AG04449 (cell line): ENCODE measurements at regions of chr6 and their contacts with region 1.

Region 1: GRCh38 chr6:159654483-159655098 is 38.5 kb downstream of the SOD2 start:
- DNase-seq: no peak
- H3K4me3 ChIP-seq: no peak overlapping the region
- CTCF ChIP-seq: peak; percentile 17

Region 2: GRCh38 chr6:159151266-159151855 is 503.2 kb before region 1 on chr6:
- CTCF ChIA-PET with region 1: interaction called, 10 read pairs
- POLR2A ChIA-PET with region 1: no interaction called
- DNase-seq: no peak
- H3K4me3 ChIP-seq: no peak overlapping the region
- CTCF ChIP-seq: peak; percentile 66

Region 3: DNA sequence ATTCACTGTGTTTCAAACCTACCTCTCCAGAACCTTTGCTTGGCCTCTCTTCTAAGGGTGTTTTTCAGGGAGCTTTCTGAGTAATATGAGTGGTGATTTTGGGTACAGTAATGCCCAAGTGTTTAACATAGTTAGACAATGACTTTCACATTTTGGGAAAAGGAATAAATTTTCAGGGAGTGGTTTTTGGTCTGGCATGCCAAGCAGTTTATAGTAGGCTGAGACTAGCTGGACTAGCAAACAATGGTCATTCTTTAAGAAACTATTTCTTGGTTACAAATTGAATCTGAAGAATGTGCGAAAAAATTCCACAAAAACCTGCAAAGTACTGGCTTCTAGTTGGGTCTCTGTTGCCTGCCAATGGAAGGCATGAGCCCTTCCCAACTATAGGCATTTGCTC is 470.0 kb before region 1 on chr6:
- CTCF ChIA-PET with region 1: interaction called, 10 read pairs
- POLR2A ChIA-PET with region 1: no interaction called
- DNase-seq: no peak
- H3K4me3 ChIP-seq: no peak overlapping the region
- CTCF ChIP-seq: no peak

Region 4: DNA sequence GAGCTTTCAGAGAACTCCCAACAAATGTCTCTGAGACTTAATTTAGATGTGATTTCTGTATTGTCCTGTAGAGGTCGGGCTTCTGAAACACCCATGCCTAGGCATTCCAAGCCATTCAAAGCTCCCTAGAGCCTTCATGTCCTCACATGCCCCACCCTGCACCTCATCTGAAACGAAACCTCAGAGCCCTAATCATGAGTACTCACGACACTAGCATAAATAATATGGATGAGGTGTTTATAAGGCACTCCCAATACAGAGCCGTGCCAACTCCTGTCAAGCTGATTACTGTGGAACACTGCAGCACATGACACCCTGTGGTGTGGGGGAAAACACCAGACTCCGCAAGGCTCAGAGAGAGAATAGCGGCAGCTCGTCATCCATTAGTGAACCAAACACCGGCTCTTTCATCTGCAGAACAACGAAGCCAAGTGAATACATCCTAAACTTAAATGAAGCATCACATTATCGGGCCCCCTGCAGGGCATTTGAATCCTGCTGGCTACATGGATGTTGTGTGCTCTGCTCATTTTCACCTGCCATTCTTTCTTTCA is 401.6 kb before region 1 on chr6:
- CTCF ChIA-PET with region 1: interaction called, 55 read pairs
- POLR2A ChIA-PET with region 1: no interaction called
- DNase-seq: no peak
- H3K4me3 ChIP-seq: no peak overlapping the region
- CTCF ChIP-seq: peak; percentile 26

Region 5: GRCh38 chr6:159665868-159666635 is 11.5 kb after region 1 on chr6:
- CTCF ChIA-PET with region 1: interaction called, 30 read pairs
- POLR2A ChIA-PET with region 1: no interaction called
- DNase-seq: no peak
- H3K4me3 ChIP-seq: no peak overlapping the region
- CTCF ChIP-seq: no peak

Region 6: DNA sequence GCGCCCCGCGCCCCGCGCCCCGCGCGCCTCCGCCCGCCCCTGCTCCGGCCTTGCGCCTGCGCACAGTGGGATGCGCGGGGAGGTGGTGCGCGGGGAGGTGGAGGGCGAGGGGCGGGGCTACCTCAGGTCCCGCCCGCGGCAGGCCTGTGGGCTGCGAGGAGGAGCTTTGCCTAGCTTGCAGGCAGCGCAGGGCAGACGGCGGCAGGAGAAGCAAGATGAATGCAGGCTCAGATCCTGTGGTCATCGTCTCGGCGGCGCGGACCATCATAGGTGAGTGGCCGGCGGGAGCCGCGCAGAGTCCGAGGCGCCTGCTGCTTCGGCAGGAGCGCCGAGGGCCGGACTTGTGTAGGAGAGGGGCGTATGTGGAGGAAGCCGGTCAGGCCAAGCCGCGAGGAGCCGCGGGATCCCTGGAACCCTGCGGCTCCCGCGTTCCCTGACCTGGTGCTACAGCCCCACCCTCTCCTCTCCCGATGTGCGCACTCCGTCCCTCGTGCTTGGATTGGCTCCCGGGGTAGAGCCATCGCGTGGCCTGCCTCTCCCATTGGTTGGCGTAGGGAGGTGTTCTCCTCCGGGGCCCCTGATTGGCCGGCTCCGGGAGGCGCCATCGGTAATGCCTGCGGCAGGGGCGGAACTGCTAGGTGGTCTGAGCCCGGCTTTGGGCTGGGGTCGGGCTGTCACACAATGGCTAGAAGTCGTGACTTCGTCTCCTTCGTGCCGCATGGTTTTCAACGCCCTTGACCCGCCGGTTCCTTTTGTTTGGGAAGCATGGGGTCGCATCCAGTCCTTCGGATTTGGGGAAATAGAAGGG is 107.5 kb after region 1 on chr6 and contains the start of gene ACAT2:
- CTCF ChIA-PET with region 1: no interaction called
- POLR2A ChIA-PET with region 1: no interaction called
- DNase-seq: peak; percentile 61
- H3K4me3 ChIP-seq: peak within 1 kb of the TSS; percentile 92
- CTCF ChIP-seq: no peak